ENCODE measurements at regions of chr6 and their contacts with region 1.

Region 1: DNA sequence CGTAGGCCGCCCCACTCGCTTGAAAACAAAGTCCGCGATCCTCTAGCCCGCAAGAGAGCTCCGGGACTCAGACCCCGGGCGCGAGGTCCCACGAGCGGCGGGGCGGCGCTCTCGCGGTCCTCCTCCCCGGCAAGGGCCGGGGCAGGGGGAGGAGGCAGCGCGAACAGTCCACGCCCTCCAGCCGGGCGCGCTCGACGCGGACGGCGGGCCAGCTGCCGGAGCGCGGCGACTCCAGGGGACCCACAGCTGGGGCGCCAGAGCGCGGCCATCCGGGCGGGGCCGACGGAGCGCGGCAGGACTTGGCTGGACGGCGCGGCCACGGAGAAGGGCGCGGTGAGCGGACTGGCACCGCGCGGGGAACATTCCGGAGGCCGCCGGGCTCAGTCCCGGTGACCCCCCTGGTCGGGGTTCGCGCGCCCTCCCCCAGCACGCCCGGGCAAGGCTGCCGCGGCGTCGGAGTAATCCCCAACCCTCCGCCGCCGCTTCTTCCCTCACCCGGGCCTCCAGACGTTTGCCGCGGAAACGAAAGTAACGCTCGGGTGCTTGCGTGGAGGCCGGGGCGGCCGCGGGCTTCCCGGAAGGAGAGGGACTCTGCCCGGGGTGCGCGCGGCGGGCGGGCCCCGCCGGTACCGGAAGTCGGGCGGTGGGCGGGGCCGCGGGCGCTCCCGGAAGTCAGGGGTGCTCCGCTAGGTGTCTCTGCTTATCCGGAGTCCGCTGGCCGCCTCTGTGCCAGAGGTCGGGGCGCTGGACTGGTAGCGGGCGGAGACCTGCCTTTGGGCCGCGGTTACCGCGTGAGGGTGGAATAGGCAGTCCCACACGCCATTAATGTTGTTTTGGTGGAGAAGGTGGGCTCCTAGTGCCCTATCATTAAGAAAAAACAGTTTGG is at the start of gene RIPK1:
- DNase-seq: peak; percentile 95
- H3K4me3 Mint-ChIP-seq: peak within 1 kb of the TSS; percentile 98
- H3K27ac Mint-ChIP-seq: peak within 1 kb of the TSS; percentile 99
- H3K4me1 Mint-ChIP-seq: peaks cover 76% of the 10 kb centered on the region
- H3K27me3 Mint-ChIP-seq: no peaks in the 10 kb centered on the region
- total RNA-seq, gene RIPK1: 33.1 to 33.3 TPM

Region 2: DNA sequence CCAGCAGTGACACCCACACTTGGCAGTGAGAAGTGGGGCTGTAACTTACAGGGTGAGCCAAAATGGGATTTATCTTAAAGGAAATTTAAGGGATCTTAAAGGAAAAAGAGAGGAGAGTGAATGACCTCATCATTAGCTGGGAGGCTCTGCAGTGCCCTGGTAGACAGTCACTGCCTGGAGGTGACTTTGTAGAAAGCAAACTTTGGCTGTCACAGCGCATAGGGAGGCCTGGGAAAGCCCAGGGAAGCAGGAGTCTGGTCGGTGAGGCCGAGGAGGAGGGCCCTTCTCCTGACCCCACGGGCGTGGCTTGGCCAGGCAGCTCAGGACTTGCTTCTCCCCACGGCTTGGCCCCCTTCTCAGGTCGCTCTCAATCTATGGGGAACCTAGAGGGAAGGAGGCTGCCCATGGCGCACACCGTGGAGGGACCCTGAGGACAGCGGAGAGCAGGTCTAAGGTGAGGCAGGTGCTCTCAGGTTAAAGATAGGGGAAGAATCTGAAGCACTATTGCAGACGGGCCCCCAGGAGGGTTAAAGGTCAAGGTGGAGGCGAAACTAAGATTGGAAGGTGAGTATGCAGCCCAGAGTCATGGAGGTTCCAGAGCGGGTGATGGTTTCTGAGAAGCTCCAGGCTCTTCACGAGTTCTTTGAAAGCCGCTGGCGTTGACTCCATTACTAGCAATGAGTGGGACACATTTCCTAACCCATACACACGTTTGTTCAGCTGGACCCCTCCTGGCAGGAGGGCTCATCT is 15.9 kb before region 1 on chr6:
- CTCF ChIA-PET with region 1: interaction called, 6 read pairs
- POLR2A ChIA-PET with region 1: interaction called, 14 read pairs
- DNase-seq: no peak
- H3K4me3 Mint-ChIP-seq: peak overlapping the region; percentile 72
- H3K27ac Mint-ChIP-seq: peak overlapping the region; percentile 51
- H3K4me1 Mint-ChIP-seq: peaks cover 33% of the 10 kb centered on the region
- H3K27me3 Mint-ChIP-seq: peaks cover 15% of the 10 kb centered on the region

Region 3: DNA sequence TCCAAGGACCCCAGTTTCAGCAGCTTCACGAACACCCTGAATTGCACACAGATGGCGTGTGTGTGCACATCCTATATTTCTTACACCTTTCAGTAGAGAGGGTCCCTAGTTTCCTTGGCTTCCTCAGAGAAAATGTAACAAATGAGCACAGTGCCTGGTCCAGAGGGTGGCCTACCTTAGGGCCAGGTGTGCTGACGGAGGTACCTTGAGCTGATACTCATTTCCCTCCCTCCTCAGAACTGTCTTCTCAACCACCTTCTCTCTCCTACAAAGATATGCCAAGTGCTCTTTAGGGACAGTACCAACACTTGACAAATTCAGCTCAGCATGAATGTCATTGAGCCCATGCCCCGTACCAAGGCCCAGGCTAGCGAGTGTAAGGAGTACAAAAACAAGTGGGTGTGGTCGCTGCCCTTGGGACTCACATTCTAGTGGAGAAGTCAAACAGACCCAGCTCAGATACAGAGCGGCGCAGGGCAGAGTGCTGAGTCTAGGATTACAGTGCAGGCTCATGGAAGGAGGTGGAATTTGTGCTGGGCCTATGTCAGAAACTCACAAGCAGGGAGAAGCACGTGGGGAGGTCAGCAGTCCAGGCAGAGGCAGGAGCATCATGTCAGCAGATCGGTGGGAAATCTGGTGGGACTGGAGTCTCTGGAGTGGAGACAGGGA is 40.3 kb after region 1 on chr6:
- CTCF ChIA-PET with region 1: no interaction called
- POLR2A ChIA-PET with region 1: no interaction called
- DNase-seq: no peak
- H3K4me3 Mint-ChIP-seq: no peak overlapping the region
- H3K27ac Mint-ChIP-seq: no peak overlapping the region
- H3K4me1 Mint-ChIP-seq: no peaks in the 10 kb centered on the region
- H3K27me3 Mint-ChIP-seq: no peaks in the 10 kb centered on the region

Measured in activated CD4-positive, alpha-beta memory T cell treated with anti-CD3 and anti-CD28 coated beads, Interleukin-2, amount 10 ng/mL, durations not matched to agents 7 days and 5 days (primary cell).